Left colon (tissue), 2 donors: ENCODE measurements at regions of chr12 and their contacts with region 1.

Region 1: GRCh38 chr12:55073043-55074022 is 52.9 kb upstream of the OR9K2 start:
- DNase-seq: peak; percentile 47 to 83
- ATAC-seq: peak; percentile 71

Region 2: GRCh38 chr12:54716261-54716660 is 357.1 kb before region 1 on chr12:
- intact Hi-C with region 1: loop called in 1 of 2 experiments (anchors 10 kb)
- DNase-seq: no peak
- ATAC-seq: no peak

Region 3: DNA sequence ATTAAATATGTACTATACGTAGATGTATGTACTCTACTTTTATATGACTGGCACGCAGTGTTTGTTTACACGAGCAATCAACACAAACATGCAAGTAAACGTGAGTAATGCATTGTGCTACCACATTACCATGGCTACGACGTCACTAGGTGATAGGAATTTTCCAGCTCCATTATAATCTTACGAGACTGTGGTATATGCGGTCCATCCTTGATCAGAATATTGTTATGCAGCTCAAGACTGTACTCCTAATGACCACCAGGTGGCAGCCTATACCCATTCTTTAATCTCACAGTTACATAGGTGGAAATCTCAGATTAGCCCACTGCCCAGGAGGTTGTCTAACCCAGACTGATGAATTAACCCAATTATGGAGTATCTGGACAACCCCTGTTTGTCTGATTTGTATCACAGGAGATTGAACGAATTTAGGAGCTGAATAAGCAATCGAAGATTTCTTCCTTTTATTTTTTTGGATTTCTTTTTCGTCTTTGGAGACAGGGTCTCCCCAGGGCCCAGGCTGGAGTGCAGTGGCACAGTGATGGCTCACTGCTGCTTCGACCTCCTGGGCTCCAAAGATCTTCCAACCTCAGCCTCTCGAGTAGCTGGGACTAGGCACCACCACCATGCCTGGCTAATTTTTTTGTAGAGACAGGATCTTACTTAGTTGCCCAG is 80.0 kb before region 1 on chr12:
- intact Hi-C with region 1: loop called (anchors 2 to 10 kb)
- DNase-seq: peak in 1 of 2 donors; percentile 50
- ATAC-seq: peak; percentile 59

Region 4: DNA sequence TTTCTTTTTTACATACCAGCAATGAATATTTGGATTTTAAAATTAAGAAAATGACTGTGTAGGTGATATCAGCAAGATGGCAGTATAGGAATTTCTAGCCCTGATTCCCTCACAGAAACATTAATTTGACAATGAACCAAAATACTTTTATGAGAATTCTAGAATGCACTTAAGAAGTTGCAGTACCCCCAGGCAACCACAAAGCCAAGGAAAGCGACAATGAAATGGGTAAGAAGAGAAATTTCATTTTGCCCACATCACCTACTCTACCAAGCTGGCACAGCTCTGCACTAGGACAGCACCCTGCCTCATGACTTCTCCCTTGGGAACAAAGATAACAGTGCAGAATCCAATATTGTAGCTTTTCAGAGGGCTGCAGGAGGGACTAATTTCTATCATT is 59.5 kb after region 1 on chr12:
- intact Hi-C with region 1: no loop called
- DNase-seq: no peak
- ATAC-seq: no peak